Activated B cell treated with CpG ODN at 0.5 μM for 24 hours (primary cell): ENCODE measurements at regions of chr5 and their contacts with region 1.

Region 1: GRCh38 chr5:3595006-3595961 is at the start of gene IRX1:
- DNase-seq: no peak
- ATAC-seq: no peak
- H3K4me3 Mint-ChIP-seq: no peak within 1 kb of the TSS
- H3K27ac Mint-ChIP-seq: no peak within 1 kb of the TSS
- H3K4me1 Mint-ChIP-seq: no peaks in the 10 kb centered on the region
- H3K27me3 Mint-ChIP-seq: peaks cover 52% of the 10 kb centered on the region
- CTCF ChIP-seq: no peak
- total RNA-seq, gene IRX1: not detected in 2 replicates

Region 2: DNA sequence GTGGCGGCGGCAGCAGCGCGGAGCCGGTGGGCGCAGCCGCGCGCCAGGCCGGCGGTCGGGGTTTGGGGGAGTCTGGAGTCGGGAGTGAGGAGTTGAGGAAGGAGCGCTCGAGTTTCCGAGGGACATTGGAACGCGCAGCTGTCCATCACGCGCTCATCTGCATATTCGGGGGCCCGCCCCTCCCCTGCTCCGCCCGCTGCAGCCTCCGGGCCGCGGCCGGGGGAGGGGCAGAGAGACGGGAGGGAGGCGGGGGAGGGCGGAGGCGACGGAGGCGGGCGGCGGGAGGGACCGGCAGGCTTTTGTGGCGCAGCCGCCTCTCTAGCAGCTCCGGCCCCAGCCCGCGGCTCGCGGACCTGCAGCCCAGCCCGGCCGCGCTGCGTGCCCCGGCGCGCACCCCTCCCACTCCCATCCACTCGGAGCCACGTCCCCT is 843.7 kb before region 1 on chr5 and contains the start of gene IRX2:
- CTCF ChIA-PET with region 1: no interaction called
- POLR2A ChIA-PET with region 1: no interaction called
- intact Hi-C with region 1: loop called (anchors 10 kb)
- DNase-seq: no peak
- ATAC-seq: no peak
- H3K4me3 Mint-ChIP-seq: no peak within 1 kb of the TSS
- H3K27ac Mint-ChIP-seq: no peak within 1 kb of the TSS
- H3K4me1 Mint-ChIP-seq: peaks cover 8% of the 10 kb centered on the region
- H3K27me3 Mint-ChIP-seq: peaks cover 44% of the 10 kb centered on the region
- CTCF ChIP-seq: no peak
- total RNA-seq, gene IRX2: not detected in 2 replicates

Region 3: GRCh38 chr5:3584724-3585531 is 10.4 kb before region 1 on chr5:
- CTCF ChIA-PET with region 1: no interaction called
- POLR2A ChIA-PET with region 1: no interaction called
- intact Hi-C with region 1: no loop called
- DNase-seq: no peak
- ATAC-seq: no peak
- H3K4me3 Mint-ChIP-seq: no peak overlapping the region
- H3K27ac Mint-ChIP-seq: no peak overlapping the region
- H3K4me1 Mint-ChIP-seq: no peaks in the 10 kb centered on the region
- H3K27me3 Mint-ChIP-seq: peaks cover 19% of the 10 kb centered on the region
- CTCF ChIP-seq: no peak